WTC11 (cell line): ENCODE measurements at regions of chr21 and their contacts with region 1.

Region 1: DNA sequence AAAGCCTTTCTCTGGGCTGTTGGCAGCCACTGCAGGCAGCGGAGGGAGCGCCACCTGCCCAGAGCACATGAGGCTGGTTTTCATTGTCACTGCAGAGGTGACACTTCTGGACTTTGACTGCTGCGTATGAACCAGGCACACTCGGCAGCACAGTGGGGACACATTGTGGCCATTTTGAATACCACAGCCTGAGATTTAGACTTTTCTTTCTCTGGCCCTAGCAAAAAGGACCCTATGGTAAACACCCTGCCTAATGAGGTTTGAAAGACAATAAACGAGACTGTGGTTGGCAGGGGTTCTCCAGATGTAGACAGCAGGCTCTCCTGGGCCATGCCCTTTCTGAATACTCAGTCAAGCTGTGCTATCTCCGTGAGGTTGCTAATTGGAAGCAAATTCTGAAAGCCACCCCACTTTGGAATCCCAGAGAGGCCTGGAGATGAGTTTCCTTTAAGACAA is 12.0 kb upstream of the KCNE2 start:
- DNase-seq: no peak
- ATAC-seq: peak; percentile 87
- H3K4me3 Mint-ChIP-seq: no peak overlapping the region
- H3K27ac Mint-ChIP-seq: no peak overlapping the region
- H3K4me1 Mint-ChIP-seq: peaks cover 7% of the 10 kb centered on the region; the same call in 1 of the 2 replicates
- H3K27me3 Mint-ChIP-seq: peaks cover 6% of the 10 kb centered on the region
- CTCF ChIP-seq: peak; percentile 27; the same call in 1 of the 2 replicates

Region 2: GRCh38 chr21:33924079-33924765 is 427.6 kb before region 1 on chr21:
- CTCF ChIA-PET with region 1: interaction called, 76 read pairs
- POLR2A ChIA-PET with region 1: interaction called, 3 read pairs
- DNase-seq: peak; percentile 94
- ATAC-seq: peak; percentile 97
- H3K4me3 Mint-ChIP-seq: no peak overlapping the region
- H3K27ac Mint-ChIP-seq: no peak overlapping the region
- H3K4me1 Mint-ChIP-seq: peaks cover 6% of the 10 kb centered on the region
- H3K27me3 Mint-ChIP-seq: peaks cover 10% of the 10 kb centered on the region
- CTCF ChIP-seq: peak; percentile 84

Region 3: GRCh38 chr21:34129039-34129891 is 222.5 kb before region 1 on chr21:
- CTCF ChIA-PET with region 1: interaction called, 22 read pairs
- POLR2A ChIA-PET with region 1: no interaction called
- DNase-seq: no peak
- ATAC-seq: peak; percentile 77
- H3K4me3 Mint-ChIP-seq: peak overlapping the region; percentile 37
- H3K27ac Mint-ChIP-seq: peak overlapping the region; percentile 60
- H3K4me1 Mint-ChIP-seq: peaks cover 81% of the 10 kb centered on the region
- H3K27me3 Mint-ChIP-seq: no peaks in the 10 kb centered on the region
- CTCF ChIP-seq: no peak

Region 4: DNA sequence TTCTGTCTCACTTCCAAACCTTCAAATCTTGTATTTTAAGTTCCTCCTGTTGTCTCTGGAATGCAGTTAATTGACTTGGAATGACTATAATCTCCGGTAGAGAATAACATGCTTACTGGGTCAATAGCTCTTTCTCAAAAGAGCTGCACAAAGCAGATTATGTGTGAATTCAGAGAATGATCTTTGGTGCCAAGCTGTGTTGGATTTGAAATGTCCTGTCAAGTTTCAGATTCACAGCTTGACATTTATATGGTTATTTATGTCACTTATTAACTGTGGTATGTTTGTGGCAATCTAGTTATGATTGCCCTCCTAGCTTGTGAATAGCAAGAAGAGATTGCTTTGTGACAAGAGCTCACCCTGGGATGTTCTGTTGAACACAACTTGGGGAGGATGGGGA is 116.3 kb before region 1 on chr21:
- CTCF ChIA-PET with region 1: interaction called, 11 read pairs
- POLR2A ChIA-PET with region 1: interaction called, 4 read pairs
- DNase-seq: no peak
- ATAC-seq: no peak
- H3K4me3 Mint-ChIP-seq: no peak overlapping the region
- H3K27ac Mint-ChIP-seq: 0 out of 2 replicates have a peak overlapping the region, but pooled peaks have one; percentile 25
- H3K4me1 Mint-ChIP-seq: peaks cover 13% of the 10 kb centered on the region
- H3K27me3 Mint-ChIP-seq: no peaks in the 10 kb centered on the region; the same call in 1 of the 2 replicates
- CTCF ChIP-seq: no peak

Region 5: GRCh38 chr21:34367321-34367935 is 15.6 kb after region 1 on chr21:
- CTCF ChIA-PET with region 1: interaction called, 18 read pairs
- POLR2A ChIA-PET with region 1: no interaction called
- DNase-seq: peak; percentile 48
- ATAC-seq: peak; percentile 88
- H3K4me3 Mint-ChIP-seq: no peak overlapping the region
- H3K27ac Mint-ChIP-seq: no peak overlapping the region
- H3K4me1 Mint-ChIP-seq: peaks cover 3% of the 10 kb centered on the region; the same call in 1 of the 2 replicates
- H3K27me3 Mint-ChIP-seq: peaks cover 3% of the 10 kb centered on the region
- CTCF ChIP-seq: no peak

Region 6: DNA sequence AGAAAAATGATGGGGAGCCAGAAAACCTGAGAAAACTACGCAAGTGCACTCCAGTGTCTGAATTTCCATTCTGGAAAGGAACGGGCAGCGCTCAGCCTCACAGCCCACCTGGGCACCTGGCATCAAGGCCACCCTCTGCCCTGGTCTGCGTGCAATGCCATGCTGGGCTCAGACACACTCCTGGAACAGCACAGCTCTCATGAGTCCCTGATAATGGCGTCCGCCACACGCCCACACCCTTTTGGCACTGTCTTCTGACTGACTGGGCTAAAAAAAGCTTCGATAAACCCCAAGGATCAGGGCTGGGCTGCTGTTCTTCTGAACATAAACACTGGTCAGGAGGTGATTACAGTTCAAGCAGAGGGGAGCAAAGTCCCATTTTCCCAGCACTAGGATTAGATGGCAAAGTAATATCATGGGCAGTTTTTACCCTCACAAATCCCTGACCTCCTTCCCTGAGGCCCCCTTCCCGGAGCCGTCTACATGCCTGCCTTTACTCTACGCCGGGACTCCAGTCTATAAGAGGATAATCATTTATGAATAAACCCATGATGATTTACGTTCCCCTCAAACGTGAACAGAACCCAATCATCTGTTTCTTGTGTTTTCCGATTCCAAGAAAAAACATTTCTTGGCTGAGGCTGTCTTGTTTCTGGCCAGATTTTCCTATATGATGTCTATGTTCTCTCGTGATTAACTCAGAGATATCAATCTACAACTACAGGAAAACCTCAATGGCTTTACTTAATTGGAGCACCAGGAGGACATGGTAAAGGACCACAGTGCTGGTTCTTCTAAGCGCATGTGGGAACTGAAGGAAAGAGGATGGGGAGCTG is 240.5 kb after region 1 on chr21:
- CTCF ChIA-PET with region 1: no interaction called
- POLR2A ChIA-PET with region 1: no interaction called
- DNase-seq: no peak
- ATAC-seq: no peak
- H3K4me3 Mint-ChIP-seq: no peak overlapping the region
- H3K27ac Mint-ChIP-seq: no peak overlapping the region
- H3K4me1 Mint-ChIP-seq: peaks cover 5% of the 10 kb centered on the region
- H3K27me3 Mint-ChIP-seq: no peaks in the 10 kb centered on the region
- CTCF ChIP-seq: no peak